Heart right ventricle (tissue), 16 donors: ENCODE measurements at regions of chr10 and their contacts with region 1.

Region 1: DNA sequence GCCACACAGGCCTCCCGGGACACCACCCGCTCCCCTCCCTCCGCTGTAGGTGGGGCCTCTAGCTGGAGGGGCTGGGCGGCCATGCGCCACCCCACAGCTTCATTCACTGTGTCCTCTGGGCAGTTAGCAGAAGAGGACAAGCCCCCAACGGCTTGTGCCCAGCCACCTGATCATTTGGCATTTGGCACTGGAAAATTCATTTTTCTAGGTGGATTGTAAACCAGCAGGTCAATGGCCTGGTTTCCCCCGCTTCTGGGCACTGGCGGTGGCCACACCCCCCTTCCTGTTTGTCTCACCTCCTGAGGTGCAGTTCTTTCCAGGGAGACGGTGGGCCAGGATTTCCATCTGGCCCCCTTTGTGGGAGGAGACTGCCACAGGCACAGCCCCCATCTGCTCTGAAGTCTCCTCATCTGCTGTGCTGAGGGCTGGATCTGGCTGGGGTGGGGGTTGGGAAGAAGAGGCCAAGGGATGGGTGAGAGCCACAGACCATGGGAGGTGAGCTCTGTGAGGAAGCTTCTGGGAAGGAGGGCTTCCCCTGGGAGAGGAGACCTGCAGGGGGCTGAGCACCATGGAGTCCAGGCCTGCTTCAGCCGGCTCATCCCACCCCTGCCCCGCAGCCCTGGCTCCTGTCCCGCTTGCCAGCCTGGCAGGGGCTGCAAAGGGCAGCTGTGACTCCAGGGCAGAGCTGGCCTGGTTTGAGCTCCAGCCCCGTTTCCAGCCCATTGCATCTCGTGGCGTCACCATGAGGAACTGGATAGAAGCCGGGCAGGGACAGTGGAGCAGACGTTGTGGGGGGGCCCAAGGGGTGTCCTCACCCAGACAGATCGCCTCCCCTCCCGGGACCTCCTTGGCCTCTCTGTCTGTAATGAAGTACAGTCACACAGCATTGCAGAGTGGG is 40.1 kb upstream of the SLC29A3 start:
- DNase-seq: no peak
- ATAC-seq: peak in 2 of 8 donors; percentile 3 to 32
- H3K4me3 ChIP-seq: no peak overlapping the region
- H3K27ac ChIP-seq: no peak overlapping the region
- H3K4me1 ChIP-seq: peaks cover 8 to 45% (median 15%) of the 10 kb centered on the region in 9 donors
- H3K27me3 ChIP-seq: no peaks in the 10 kb centered on the region
- CTCF ChIP-seq: no peak

Region 2: DNA sequence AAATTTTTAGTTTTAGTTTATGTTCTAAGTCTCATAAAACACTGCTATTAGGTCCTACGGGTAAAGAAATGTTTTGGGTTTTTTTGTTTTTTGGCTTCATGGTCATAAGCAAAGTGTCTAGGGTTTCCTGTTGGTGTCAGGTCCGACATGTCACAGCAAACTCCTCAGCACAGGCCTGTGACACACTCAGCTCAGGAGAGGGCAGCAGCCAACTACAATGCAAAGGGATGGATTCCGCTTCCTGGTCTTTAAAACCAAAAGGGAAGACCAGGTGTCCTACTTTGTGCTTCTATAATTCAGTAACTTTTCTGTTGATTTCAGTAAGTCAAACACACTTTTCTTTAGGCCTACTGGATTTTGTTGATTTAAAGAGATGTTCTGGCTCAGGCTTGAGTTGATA is 1310.1 kb before region 1 on chr10:
- intact Hi-C with region 1: no loop called
- DNase-seq: no peak
- ATAC-seq: no peak
- H3K4me3 ChIP-seq: no peak overlapping the region
- H3K27ac ChIP-seq: no peak overlapping the region
- H3K4me1 ChIP-seq: no peaks in the 10 kb centered on the region
- H3K27me3 ChIP-seq: peaks cover 0 to 27% (median 8%) of the 10 kb centered on the region in 7 donors
- CTCF ChIP-seq: no peak

Region 3: DNA sequence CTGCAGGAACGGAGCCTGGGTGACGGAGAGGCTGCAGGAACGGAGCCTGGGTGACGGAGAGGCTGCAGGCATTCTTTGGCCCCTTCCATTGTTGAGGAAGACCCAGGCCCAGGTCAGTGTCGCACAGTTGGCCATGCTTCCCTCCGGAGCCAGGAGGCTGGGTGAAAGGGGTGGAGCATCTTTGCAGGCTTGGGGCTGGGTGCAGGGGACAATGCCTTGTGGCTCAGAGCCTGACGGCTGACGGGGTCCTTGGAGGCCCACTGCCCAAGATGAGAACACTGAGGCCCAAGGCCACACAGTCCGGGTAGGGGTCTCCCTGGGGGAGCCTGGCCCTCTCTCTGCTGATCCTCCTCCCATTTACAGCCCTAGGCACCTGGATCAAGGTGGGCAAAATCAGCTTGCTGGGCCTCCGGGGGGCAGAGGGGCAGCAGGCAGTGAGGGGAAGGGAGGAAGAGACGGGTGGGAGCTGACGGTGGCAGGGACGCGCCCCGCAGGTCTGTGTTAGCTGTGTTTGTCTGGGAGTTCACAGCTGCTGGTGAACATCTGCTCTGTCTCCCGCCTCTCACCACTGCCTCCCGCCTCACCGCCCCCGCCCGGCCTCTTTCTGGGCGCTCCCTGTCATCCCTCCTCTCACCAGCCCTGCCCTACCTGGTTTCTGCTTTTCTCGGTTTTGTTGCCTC is 359.9 kb before region 1 on chr10:
- intact Hi-C with region 1: loop called in 3 of 10 experiments (anchors 2 to 5 kb)
- DNase-seq: no peak
- ATAC-seq: peak in 3 of 8 donors; percentile 12 to 31 (median 18)
- H3K4me3 ChIP-seq: no peak overlapping the region
- H3K27ac ChIP-seq: no peak overlapping the region
- H3K4me1 ChIP-seq: no peaks in the 10 kb centered on the region
- H3K27me3 ChIP-seq: peaks cover 0 to 38% (median 9%) of the 10 kb centered on the region in 7 donors
- CTCF ChIP-seq: no peak